T-cell (primary cell): ENCODE measurements at regions of chr13 and their contacts with region 1.

Region 1: GRCh38 chr13:96967248-96967745 is 27.0 kb downstream of the OXGR1 start:
- DNase-seq: no peak
- ATAC-seq: no peak
- H3K4me3 ChIP-seq: no peak overlapping the region
- H3K4me3 Mint-ChIP-seq: no peak overlapping the region
- H3K27ac ChIP-seq: no peak overlapping the region
- H3K27ac Mint-ChIP-seq: no peak overlapping the region
- H3K4me1 ChIP-seq: no peaks in the 10 kb centered on the region
- H3K4me1 Mint-ChIP-seq: no peaks in the 10 kb centered on the region
- H3K27me3 ChIP-seq: no peaks in the 10 kb centered on the region
- H3K27me3 Mint-ChIP-seq: no peaks in the 10 kb centered on the region

Region 2: GRCh38 chr13:98827449-98827848 is 1860.2 kb after region 1 on chr13:
- CTCF ChIA-PET with region 1: no interaction called
- POLR2A ChIA-PET with region 1: interaction called in 1 of 2 experiments, 14 read pairs
- DNase-seq: no peak
- ATAC-seq: no peak
- H3K4me3 ChIP-seq: no peak overlapping the region
- H3K4me3 Mint-ChIP-seq: no peak overlapping the region
- H3K27ac ChIP-seq: no peak overlapping the region
- H3K27ac Mint-ChIP-seq: no peak overlapping the region
- H3K4me1 ChIP-seq: peaks cover 0 to 3% of the 10 kb centered on the region in 2 experiments
- H3K4me1 Mint-ChIP-seq: peaks cover 9 to 17% (median 9%) of the 10 kb centered on the region in 3 donors
- H3K27me3 ChIP-seq: no peaks in the 10 kb centered on the region
- H3K27me3 Mint-ChIP-seq: no peaks in the 10 kb centered on the region